ENCODE measurements at regions of chrX and their contacts with region 1.

Region 1: GRCh38 chrX:70454441-70455365 is 10.1 kb downstream of the DLG3 start:
- DNase-seq: peak; percentile 50 to 57
- ATAC-seq: peak; percentile 64 to 81
- H3K4me3 ChIP-seq: peak overlapping the region; percentile 40
- H3K27ac ChIP-seq: peak overlapping the region; percentile 49 to 75
- H3K4me1 ChIP-seq: 0 out of 3 replicates have a peak, but pooled peaks cover 3% of the 10 kb centered on the region
- CTCF ChIP-seq: peak; percentile 73
- EP300 ChIP-seq: no peak
- POLR2A ChIP-seq: no peak
- RAD21 ChIP-seq: peak; percentile 82 to 86

Region 2: GRCh38 chrX:70360366-70360765 is 94.3 kb before region 1 on chrX:
- CTCF ChIA-PET with region 1: no interaction called
- POLR2A ChIA-PET with region 1: no interaction called
- DNase-seq: no peak
- ATAC-seq: no peak
- H3K4me3 ChIP-seq: no peak overlapping the region
- H3K27ac ChIP-seq: no peak overlapping the region
- H3K4me1 ChIP-seq: no peaks in the 10 kb centered on the region
- CTCF ChIP-seq: no peak
- EP300 ChIP-seq: no peak
- POLR2A ChIP-seq: no peak
- RAD21 ChIP-seq: no peak

Region 3: DNA sequence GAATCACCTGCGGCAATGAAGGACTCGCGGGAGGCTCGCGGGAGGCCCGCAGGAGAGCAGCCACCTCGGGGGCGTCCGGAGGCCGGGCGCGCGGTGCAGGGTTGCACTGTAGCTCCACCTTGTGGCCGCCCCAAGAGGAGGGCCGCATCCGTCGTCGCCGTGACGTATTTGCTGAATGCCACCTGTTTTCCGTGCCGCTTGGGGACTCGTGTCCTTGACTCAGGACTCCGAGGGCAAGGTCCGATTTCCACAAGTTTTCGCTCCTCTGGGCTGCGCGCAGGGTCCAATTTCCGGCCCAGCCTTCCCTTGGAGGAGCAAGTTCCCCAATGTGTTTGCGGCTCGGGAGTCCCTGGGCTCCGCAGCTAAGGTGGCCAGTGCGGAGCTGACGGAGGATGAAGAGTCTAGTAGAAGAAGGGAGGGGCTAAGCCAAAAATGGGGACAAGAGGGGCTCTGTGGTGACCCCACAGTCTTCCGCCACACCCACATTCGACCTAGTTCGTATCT is 20.8 kb before region 1 on chrX:
- CTCF ChIA-PET with region 1: interaction called, 15 read pairs
- POLR2A ChIA-PET with region 1: interaction called, 4 read pairs
- DNase-seq: peak; percentile 53 to 70
- ATAC-seq: peak; percentile 70 to 84
- H3K4me3 ChIP-seq: peak overlapping the region; percentile 72
- H3K27ac ChIP-seq: peak overlapping the region; percentile 78 to 88
- H3K4me1 ChIP-seq: peaks cover 9% of the 10 kb centered on the region; the same call in 1 of the 3 replicates
- CTCF ChIP-seq: peak; percentile 65
- EP300 ChIP-seq: no peak
- POLR2A ChIP-seq: no peak
- RAD21 ChIP-seq: peak; percentile 50 to 66

Region 4: DNA sequence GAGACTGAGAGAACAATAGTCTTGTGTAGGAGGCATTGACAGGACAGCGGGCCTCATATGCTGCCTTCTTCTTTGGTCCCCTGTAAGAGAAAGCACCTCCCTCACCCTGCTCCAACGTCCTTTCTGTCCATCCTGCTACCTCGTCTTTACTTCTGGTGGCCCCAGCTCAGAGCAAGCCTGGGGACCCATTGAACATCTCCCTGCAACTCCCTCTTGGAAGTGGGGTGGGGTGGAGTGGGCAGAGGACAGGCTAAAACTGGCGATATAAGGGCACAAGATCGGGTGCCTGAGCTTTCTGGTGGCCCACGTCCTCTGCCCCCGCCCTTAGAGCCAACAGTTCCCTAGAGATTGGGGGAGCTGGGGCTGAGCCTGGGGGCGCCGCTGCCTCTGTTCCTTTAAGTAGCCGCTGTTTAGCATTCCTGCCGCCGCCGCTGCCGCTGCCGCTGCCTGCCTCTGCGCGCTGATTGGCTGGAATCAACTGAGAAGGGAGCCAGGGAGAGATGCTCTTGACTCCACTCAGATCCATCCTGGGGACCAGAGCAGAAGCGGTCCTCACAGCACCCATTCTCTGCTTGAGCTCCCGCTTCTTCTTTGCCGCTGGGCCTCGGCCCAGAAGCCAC is 10.3 kb before region 1 on chrX and contains the start of gene DLG3:
- CTCF ChIA-PET with region 1: interaction called, 29 read pairs
- POLR2A ChIA-PET with region 1: no interaction called
- DNase-seq: peak; percentile 33 to 42
- ATAC-seq: peak; percentile 72 to 82
- H3K4me3 ChIP-seq: peak within 1 kb of the TSS; percentile 47
- H3K27ac ChIP-seq: peak within 1 kb of the TSS in 1 of 2 experiments; percentile 42; a peak in 3 of 6 replicates
- H3K4me1 ChIP-seq: 0 out of 3 replicates have a peak, but pooled peaks cover 4% of the 10 kb centered on the region
- CTCF ChIP-seq: no peak
- EP300 ChIP-seq: no peak
- POLR2A ChIP-seq: no peak
- RAD21 ChIP-seq: no peak
- polyA plus RNA-seq, gene DLG3: 11.2 and 12.8 TPM in 2 replicates

Region 5: GRCh38 chrX:70554081-70554480 is 99.4 kb after region 1 on chrX:
- CTCF ChIA-PET with region 1: interaction called, 31 read pairs
- POLR2A ChIA-PET with region 1: interaction called, 4 read pairs
- DNase-seq: peak; percentile 8 to 13
- ATAC-seq: peak; percentile 33 to 43; a peak in 2 of 6 replicates
- H3K4me3 ChIP-seq: no peak overlapping the region
- H3K27ac ChIP-seq: peak overlapping the region; percentile 67 to 74; a peak in 4 of 6 replicates
- H3K4me1 ChIP-seq: peaks cover 8% of the 10 kb centered on the region; the same call in 2 of the 3 replicates
- CTCF ChIP-seq: peak; percentile 52
- EP300 ChIP-seq: no peak
- POLR2A ChIP-seq: no peak
- RAD21 ChIP-seq: peak; percentile 58 to 66

Measured in A549 (cell line).